Posterior cingulate gyrus (tissue), 11 donors: ENCODE measurements at regions of chr11 and their contacts with region 1.

Region 1: DNA sequence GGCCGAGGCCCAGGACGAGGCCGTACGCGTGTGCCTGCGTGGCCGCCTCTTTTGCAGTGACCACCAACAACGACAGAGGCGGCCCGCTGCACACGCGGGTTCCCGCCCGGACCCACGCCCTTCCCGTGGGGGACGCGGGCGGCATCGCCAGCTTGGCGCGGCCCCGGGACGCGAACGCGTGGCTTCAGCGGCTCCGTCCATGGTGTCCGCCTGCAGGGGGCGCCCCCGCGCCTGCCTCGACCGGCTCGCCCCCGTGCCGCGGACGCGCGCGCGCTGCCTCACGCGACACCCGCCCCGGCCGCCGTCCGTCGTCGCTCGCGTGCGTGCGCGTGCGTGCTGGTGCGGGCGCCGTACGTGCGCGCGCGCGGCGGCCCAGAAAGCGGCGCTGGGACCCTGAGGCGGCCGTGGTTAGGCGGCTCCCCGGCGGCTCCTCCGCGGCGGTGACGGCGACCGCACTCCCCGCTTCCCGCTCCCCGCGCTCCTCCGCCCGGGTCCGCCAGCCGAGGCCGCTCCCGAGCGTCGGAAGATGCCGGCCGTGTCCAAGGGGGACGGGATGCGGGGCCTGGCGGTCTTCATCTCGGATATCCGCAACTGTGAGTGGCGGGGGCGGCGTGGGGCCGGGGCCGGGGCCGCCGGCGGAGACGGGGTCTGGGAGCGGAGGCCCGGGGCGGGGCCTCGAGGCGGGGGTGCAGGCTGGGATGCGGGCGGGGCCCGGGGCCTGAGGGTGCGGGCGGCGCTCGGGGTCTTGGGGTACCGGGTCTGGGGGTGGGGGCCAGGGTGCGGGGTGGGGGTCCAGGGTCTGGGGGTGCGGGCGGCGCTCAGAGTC is at the start of gene AP2A2:
- DNase-seq: peak; percentile 68 to 98 (median 78)

Region 2: GRCh38 chr11:910589-911195 is 15.0 kb before region 1 on chr11 and contains the start of gene CHID1:
- intact Hi-C with region 1: loop called (anchors 2 kb)
- DNase-seq: peak; percentile 81 to 98 (median 87)

Region 3: GRCh38 chr11:975827-976226 is 50.1 kb after region 1 on chr11:
- intact Hi-C with region 1: loop called (anchors 2 kb)
- DNase-seq: peak in 6 of 10 donors; percentile 61 to 93 (median 84)

Region 4: DNA sequence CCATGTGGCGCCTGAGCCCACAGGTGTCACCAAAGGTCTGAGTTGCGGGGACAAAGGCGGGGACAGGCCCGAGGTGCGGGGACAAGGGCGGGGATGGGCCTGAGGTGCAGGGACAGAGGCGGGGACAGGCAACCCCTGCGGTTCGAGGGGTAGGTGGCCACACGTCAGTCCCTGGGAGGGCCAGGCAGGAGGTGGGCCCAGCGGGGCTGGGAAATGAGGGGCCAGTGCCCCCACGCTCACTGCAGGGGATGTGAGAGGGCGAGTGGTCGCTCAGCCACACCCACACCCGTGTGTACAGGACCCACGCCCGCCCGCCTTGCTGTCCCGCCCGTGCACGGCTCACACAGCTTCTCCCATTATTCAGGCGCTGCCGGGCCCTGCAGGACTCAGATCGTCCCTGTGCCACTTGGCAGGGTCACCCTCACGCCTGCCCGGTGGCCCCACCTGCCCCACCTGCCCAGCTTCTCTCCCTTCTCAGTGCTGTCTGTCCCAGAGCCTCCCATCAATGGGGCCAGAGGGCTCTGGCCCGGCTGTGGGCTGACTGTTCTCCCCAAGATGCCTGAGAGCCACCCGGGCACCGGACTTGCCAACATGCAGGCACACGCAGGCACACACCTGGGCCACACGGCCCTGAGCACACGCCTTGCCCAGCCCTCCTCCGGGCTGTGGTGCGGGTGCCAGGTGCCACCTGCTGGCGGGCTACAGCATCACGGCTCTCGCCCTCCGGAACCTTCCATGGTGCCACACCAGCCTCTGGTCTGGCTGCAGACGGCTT is 125.1 kb after region 1 on chr11:
- intact Hi-C with region 1: loop called (anchors 10 kb)
- DNase-seq: peak; percentile 47 to 96 (median 70)